Ovary (tissue), 10 donors: ENCODE measurements at regions of chr11 and their contacts with region 1.

Region 1: DNA sequence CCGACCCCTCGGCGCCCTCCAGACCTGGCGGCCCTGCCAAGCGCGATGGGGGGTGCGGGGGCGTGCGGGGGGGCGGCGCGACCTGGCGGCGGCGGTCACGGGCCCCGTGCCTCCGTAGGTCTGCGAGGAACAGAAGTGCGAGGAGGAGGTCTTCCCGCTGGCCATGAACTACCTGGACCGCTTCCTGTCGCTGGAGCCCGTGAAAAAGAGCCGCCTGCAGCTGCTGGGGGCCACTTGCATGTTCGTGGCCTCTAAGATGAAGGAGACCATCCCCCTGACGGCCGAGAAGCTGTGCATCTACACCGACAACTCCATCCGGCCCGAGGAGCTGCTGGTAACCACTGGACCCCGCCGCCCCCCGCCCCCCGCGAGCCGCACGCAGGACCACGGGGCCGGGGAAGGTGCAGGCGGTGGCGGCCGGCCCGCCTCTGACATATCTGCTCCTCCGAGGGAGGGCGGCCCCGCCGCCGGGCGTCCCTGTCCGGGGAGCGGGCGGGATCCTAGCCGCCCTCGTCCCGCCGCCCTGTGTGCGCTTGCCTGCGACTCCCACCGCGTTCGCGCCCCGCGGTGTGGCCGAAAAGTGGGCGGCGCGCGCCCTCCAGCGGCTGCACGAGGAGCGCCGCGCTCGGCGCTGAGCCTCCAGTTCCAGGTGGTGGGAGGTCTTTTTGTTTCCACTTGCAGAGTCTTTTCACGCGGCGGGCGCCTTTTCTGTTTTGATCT is 2.1 kb downstream of the CCND1 start:
- DNase-seq: peak; percentile 57 to 86 (median 76)
- H3K4me3 ChIP-seq: peak overlapping the region; percentile 57
- H3K27ac ChIP-seq: no peak overlapping the region
- H3K4me1 ChIP-seq: peaks cover 5% of the 10 kb centered on the region
- H3K27me3 ChIP-seq: peaks cover 5% of the 10 kb centered on the region
- CTCF ChIP-seq: peak; percentile 80 to 86 (median 81)
- EP300 ChIP-seq: no peak
- POLR2A ChIP-seq: no peak

Region 2: DNA sequence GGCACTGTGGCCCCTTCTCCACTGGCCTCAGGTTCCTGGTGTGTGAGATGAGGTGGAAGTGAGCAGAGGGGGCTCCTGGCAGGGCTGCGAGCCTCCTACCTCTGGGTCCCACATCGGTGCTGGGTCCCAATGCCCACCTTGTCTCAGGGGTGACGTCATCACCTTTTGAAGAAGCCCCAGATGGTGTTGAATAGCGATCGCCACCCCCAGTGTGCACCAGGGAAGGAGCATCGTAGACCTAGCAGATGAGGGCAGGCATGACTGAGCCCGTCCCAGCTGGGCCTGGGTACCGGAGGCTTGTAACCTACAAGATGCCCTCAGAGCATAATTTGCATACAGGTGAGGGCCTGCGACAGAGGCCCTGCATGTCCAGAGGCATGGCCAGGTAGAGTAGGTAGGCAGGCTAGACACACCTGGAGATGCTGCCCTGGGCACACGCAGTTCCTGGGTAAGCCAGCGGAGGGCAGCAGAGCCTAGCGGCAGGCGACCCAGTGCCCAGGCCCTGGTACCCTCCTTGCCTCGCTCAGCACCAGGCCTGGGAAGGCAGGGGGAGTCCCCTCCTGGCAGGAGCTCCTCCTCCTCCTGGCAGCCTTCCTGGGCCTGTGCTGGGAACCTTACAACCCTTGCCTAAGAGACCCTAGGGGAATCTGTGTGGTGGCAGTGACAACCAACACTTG is 541.8 kb before region 1 on chr11:
- intact Hi-C with region 1: loop called (anchors 1 to 10 kb)
- DNase-seq: peak in 4 of 5 donors; percentile 37 to 74 (median 64)
- H3K4me3 ChIP-seq: no peak overlapping the region
- H3K27ac ChIP-seq: no peak overlapping the region
- H3K4me1 ChIP-seq: peaks cover 3% of the 10 kb centered on the region
- H3K27me3 ChIP-seq: no peaks in the 10 kb centered on the region
- CTCF ChIP-seq: peak; percentile 53 to 63 (median 59)
- EP300 ChIP-seq: no peak
- POLR2A ChIP-seq: no peak

Region 3: DNA sequence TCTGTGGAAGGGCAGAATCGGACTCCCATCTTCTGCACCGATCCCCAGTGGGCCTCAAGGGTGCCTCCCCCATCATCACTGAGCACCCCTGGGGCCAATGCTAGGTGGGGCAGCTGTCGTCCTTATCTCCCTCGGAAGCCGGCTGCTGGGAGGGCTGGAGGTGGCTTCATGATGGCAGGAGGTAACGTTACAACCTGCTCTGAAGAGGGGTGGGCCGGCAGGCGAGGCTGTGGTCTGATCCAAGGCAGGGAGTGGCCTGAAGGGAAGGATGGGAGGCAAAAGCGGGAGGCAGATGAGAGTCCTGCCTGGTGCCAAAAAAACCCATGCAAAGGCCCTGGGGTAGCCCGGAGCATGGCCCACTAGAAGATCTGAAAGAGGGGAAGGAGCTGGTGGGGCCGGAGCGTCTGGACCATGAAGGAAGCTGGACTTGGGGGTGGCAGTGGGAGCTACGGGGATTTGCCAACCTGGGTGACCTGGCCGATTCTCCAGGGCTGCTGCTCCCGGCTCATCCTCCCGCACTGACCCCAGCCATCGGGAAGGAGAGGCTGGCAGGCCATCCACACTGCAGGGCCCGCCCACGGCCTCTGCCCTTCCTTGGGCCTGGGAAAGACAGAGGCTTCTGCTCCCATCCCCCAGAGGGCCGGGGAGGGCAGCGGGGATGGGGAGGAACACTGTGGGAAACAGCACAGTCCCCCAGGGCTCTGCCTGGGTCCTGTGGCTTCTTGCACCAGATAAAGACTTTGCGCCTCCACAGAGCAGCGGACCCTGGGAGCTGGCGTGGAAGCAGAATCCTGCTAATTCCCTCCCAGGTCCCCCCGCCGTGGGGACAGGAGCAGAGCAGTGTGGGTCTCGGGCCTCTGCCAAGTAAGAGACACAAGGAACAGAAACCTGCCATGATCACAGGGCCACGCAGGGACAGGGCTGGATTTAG is 248.9 kb before region 1 on chr11:
- intact Hi-C with region 1: no loop called
- DNase-seq: no peak
- H3K4me3 ChIP-seq: no peak overlapping the region
- H3K27ac ChIP-seq: no peak overlapping the region
- H3K4me1 ChIP-seq: no peaks in the 10 kb centered on the region
- H3K27me3 ChIP-seq: no peaks in the 10 kb centered on the region
- CTCF ChIP-seq: no peak
- EP300 ChIP-seq: no peak
- POLR2A ChIP-seq: no peak

Region 4: DNA sequence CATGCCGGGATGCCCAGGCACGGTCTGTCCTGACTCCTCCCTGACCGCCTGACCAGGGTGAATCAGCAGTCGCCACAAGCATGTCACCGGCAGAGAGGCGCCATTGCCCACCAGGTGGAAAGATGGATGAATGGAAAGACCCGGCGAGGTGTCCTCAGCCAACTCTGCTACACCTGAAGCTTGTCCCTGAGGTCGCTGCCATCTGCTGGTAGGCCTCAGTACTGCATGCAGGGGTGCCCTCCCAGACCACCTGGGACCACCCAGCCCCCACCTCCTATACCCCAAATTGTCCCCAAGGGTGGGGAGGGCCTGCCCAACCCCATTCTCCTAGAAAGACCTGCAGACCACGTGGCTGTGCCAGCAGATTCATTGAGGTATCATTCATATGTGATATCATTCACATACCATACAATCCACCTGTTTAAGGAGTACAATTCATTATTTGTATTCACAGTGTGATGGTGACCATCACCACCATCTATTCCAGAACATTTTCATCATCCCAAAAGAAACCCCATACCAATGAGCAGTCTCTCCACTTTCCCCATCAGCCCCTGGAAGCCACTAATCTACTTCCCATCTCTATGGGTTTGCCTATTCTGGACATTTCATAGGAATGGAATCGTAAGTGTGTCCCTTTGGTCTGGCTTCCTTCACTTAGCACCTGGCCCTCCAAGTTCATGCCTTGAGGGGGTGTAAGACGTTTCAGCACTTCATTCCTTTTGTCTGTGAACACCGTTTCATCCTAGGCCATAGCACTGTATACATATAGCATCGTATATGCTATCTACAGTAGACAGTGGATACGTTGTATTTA is 158.7 kb after region 1 on chr11:
- intact Hi-C with region 1: no loop called
- DNase-seq: no peak
- H3K4me3 ChIP-seq: no peak overlapping the region
- H3K27ac ChIP-seq: no peak overlapping the region
- H3K4me1 ChIP-seq: no peaks in the 10 kb centered on the region
- H3K27me3 ChIP-seq: no peaks in the 10 kb centered on the region
- CTCF ChIP-seq: no peak
- EP300 ChIP-seq: no peak
- POLR2A ChIP-seq: no peak